ENCODE measurements at regions of chr12 and their contacts with region 1.

Region 1: GRCh38 chr12:120228291-120229070 is 27.6 kb upstream of the RPLP0 start:
- DNase-seq: no peak
- H3K4me3 ChIP-seq: peak overlapping the region in 1 of 2 donors; percentile 6
- H3K27ac ChIP-seq: peak overlapping the region; percentile 85
- H3K4me1 ChIP-seq: peaks cover 92% of the 10 kb centered on the region
- H3K27me3 ChIP-seq: no peaks in the 10 kb centered on the region
- CTCF ChIP-seq: peak; percentile 89 to 95 (median 92)
- POLR2A ChIP-seq: no peak

Region 2: DNA sequence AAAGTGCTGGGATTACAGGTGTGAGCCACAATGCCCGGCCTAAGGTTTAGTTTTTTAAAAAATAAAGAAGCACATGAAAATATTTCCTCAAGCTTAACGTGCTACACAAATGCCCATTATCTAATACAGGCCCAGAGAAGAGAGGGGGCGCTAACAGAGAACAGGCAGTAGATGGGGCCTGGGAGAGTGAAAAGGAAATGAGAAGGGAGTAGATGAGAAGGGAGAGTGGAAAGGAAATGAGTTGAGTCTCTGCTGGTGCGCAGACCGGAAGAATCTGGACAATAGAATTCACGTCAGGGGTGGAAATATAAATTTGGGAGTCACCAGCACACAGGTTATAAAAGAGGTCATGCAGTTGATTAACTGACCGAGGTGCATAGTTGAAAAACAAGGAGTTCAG is 26.3 kb after region 1 on chr12:
- intact Hi-C with region 1: no loop called
- DNase-seq: no peak
- H3K4me3 ChIP-seq: no peak overlapping the region
- H3K27ac ChIP-seq: peak overlapping the region; percentile 86
- H3K4me1 ChIP-seq: peaks cover 87% of the 10 kb centered on the region
- H3K27me3 ChIP-seq: no peaks in the 10 kb centered on the region
- CTCF ChIP-seq: no peak
- POLR2A ChIP-seq: no peak

Region 3: DNA sequence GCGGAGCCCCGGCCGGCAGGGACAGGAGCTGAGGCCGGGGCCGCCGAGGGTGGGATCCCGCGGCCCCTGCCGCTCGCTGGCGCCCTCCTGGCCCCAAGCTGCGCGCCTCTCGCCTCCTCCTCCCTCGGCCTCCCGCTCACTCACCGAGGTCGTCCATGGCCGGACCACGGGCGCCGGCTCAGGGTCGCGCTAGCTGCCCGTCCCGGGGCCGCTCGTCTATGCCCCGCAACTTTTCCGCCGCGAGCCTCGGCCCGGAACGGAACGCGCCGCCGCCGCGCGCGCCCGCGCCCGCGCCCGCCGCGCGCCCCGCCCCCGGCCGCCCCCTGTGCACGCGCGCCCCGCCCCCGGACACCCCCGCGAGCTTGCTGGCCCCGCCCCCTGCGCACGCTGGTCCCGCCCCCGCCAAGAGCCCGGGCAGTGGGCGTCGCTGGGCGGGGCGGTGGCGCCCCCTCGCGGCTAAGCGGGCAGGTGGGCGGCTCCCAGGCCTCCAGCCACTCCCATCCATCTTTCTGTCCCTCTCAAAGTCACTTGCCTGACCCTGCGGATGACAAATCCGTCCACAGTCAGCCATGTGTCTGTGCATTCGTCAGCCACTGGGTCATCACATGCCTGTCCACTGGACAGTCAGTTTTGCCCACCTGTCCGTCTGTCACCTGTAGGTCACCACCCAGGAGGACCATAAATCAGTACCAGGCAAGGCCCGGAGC is 37.1 kb after region 1 on chr12 and contains the start of gene PXN:
- intact Hi-C with region 1: loop called (anchors 2 kb)
- DNase-seq: no peak
- H3K4me3 ChIP-seq: peak within 1 kb of the TSS; percentile 69 to 94
- H3K27ac ChIP-seq: peak within 1 kb of the TSS; percentile 86
- H3K4me1 ChIP-seq: peaks cover 50% of the 10 kb centered on the region
- H3K27me3 ChIP-seq: no peaks in the 10 kb centered on the region
- CTCF ChIP-seq: peak; percentile 64 to 92 (median 83)
- POLR2A ChIP-seq: peak in 1 of 2 donors; percentile 44
- total RNA-seq, gene PXN: 95.3 TPM